Brain microvascular endothelial cell (primary cell): ENCODE measurements at regions of chr7 and their contacts with region 1.

Region 1: DNA sequence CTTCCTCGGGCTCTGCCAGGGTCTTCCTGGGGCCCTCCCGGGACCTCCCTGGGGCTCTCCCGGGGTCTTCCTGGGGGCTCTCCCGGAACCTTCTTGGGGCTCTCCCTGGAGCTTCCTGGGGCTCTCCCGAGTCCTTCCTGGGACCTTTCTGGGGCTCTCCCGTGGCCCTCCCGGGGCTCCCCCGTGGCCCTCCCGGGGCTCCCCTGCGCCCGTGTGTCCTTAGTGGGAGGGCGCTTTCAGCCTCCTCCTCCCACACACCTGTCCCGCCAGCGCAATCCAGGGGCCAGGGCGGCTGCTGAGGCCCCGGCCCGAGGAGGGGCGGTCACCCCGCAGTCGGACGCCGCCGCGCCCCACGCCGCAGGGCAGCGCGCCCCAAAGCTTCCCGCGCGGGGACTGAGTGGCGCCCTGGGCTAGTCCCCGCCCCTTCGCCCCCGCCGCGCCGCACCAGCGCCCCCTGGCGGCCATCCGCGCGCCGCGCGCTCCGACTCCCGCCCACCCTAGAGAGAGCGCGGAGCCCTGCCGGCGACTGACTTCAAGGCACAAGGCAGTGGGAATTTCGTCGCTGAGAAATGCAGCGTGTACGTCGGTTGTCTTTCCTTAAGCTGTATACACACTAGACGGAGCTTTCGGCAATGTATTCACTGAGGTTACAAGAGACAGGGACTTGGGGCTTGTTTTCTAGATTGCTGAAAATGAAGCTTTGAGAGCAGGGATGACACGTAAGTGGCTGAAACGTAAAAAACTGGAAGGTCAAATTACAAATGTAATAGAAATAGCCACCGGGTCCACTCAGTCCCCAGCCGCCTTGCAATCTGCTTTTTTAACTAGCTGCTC is 47.1 kb downstream of the INSIG1 start:
- DNase-seq: peak; percentile 64
- H3K4me3 ChIP-seq: peak overlapping the region; percentile 30
- H3K27ac ChIP-seq: no peak overlapping the region
- H3K27me3 ChIP-seq: peaks cover 6% of the 10 kb centered on the region
- CTCF ChIP-seq: peak; percentile 66

Region 2: DNA sequence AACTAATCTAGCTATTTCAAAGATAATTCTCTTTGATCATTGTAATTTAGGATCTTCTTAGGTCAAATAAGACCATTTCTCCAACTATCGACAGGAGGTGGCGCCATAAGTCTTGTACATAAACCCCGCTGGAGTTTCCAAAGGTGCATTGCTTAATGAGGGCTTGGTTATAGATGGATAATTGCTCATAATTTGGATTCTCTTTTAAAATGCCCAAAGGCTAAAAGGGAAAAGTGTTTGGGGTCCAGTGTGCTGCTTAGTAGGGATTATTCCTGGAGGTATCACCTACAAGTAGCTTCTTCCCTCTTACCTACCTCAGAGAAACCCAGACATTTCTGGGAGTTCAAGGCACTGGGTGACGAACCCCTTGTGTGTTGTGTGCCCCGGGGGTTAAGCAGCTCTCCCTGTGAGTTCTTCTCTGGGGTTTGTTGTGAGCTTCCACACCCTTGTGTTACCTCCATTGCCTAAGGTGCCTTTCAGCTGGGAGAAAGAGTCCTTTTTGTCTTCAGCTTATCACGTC is 417.1 kb before region 1 on chr7:
- in situ Hi-C with region 1: loop called (anchors 25 kb)
- DNase-seq: peak; percentile 82
- H3K4me3 ChIP-seq: peak overlapping the region; percentile 50
- H3K27ac ChIP-seq: peak overlapping the region; percentile 72
- H3K27me3 ChIP-seq: no peaks in the 10 kb centered on the region
- CTCF ChIP-seq: peak; percentile 64